ENCODE measurements at regions of chr1 and their contacts with region 1.

Region 1: GRCh38 chr1:100928128-100928527 is 32.2 kb downstream of the SLC30A7 start:
- DNase-seq: peak; percentile 4

Region 2: GRCh38 chr1:100670083-100670482 is 258.0 kb before region 1 on chr1:
- in situ Hi-C with region 1: no loop called
- DNase-seq: no peak

Region 3: DNA sequence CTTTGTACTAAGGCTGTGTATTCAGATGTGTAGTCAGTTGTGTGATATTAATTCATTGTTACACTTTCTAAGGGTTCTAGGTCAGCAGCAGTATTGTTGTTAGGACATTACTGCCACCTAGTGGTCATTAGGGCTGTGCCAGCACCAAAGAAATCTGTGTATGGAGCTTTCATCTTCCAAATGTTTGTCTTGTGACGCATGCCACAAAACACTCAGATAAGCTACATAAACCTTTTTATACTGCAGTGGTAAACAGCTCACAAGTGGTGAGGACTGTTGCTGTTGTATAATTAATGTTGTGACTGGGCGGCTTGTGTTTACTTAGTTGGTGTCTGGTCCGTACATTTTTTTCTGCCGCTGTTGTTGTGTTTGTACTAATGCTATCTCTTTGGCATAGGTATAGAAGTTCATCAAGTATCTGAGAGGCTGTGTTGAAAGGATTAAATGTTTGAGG is 360.4 kb after region 1 on chr1:
- in situ Hi-C with region 1: loop called (anchors 25 kb)
- DNase-seq: peak; percentile 87